Activated T-helper 1 cell treated with anti-CD3 and anti-CD28 coated beads, Interleukin-12 subunit alpha, Interleukin-12 subunit beta, Interleukin-2, Interleukin-4 antibody, amounts not matched to agents 30 ng/mL and 10 ng/mL and 1 ng/mL, durations not matched to agents 14 hours and 24 hours and 36 hours (primary cell): ENCODE measurements at regions of chr13 and their contacts with region 1.

Region 1: DNA sequence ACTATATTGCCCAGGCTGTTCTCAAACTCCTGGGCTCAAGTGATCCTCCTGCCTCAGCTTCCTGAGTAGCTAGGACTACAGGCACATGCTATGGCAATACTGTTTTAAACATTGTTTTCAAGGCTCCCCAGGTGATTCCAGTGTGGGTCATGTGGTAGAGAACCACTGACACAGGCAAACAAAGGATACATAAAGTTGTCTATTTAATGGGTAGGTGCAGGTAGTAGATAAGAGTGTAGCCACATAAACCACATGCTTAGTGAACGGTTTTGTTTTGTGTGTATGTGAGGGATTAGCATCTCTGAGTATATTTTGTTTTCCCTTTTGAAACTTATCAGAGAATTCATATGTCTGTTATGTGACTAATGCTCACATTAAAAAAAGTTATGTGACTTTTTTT is 36.7 kb downstream of the USPL1 start:
- DNase-seq: peak; percentile 48
- H3K4me3 Mint-ChIP-seq: peak overlapping the region; percentile 68
- H3K27ac Mint-ChIP-seq: peak overlapping the region; percentile 89
- H3K4me1 Mint-ChIP-seq: peaks cover 43% of the 10 kb centered on the region
- H3K27me3 Mint-ChIP-seq: no peaks in the 10 kb centered on the region

Region 2: DNA sequence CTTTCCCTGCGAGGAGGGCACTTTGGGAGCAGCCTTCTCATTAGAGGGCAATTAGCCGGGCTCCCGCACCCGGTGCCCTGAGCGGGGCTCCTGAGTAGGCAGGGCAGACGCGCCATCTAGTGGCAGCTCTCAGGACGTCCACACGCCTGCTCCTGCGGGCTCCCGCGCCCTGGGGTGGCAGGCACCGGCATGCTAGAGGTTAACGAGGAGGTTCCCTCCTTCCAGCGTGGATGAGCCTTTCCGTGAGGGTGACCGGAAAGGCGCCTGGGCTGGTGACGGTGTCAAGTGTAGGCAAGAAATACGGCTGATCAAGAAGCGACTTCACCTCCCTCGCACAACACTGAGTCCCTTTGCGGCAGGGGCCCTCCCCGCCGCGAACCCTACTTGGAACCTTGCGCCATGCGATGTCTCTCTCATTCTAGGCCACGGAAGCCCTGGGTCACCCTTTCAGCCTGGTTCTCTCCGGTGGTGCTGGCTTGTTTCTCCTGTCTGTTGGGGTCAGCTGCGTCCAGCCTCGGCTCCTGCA is 148.6 kb after region 1 on chr13:
- intact Hi-C with region 1: loop called (anchors 1 kb)
- DNase-seq: peak; percentile 69
- H3K4me3 Mint-ChIP-seq: peak overlapping the region; percentile 47
- H3K27ac Mint-ChIP-seq: no peak overlapping the region
- H3K4me1 Mint-ChIP-seq: peaks cover 28% of the 10 kb centered on the region
- H3K27me3 Mint-ChIP-seq: peaks cover 4% of the 10 kb centered on the region